ENCODE measurements at regions of chr12 and their contacts with region 1.

Region 1: DNA sequence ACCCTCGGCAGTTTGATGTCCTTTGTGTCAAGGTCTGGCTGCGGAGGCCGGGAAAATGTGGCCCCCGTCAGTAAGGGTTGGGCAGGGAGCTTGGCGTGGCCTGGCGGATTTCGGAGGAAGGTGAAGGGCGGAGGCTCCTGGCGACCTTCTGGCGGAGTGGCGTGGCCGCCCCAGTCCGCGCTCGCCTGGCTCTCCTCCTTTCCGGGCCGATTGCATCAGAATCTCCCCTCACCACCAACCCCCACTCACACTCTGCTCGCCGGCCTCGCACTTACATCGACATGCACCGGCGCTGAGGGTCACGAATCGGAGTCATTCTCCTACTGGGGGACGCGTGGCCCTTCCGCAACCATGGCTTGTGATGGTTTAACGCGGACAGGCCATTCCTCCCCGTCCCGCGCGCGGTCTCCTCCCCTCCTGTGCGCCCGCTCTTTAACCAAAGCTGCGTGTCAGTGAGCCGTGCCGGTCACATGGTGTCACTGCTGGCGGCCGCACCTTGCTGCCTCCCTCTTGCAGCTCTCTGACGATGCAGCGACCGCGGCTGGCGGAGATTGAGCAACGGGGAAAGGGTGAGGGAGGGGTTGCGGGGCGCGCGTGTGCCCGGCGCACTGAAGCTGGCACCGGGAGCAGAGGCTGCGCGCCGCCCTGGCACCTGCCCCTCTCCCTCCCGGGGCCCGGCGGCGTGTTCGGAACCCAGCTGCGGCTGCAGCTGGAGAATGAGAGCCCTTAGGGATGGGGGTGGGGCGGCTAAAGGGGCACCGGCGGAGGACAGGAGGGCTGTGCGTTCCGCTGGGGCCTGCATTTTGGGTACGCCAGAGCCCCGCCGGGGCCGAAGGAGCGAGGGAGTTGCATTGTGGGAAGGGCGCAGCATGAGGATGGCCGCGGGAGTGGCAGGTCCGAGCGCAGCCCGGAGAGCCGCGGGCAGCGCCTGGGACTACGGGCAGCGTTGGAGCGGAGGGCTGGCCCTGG is at the start of gene SLC38A1:
- DNase-seq: peak; percentile 88
- H3K4me3 ChIP-seq: peak within 1 kb of the TSS; percentile 92
- H3K27ac ChIP-seq: peak within 1 kb of the TSS; percentile 91
- H3K4me1 ChIP-seq: peaks cover 44% of the 10 kb centered on the region
- CTCF ChIP-seq: 0 out of 2 replicates have a peak, but pooled peaks have one; percentile 25
- total RNA-seq, gene SLC38A1: 114 and 117 TPM in 2 replicates

Region 2: GRCh38 chr12:45215419-45216229 is 1053.2 kb before region 1 on chr12 and contains the start of gene ANO6:
- CTCF ChIA-PET with region 1: no interaction called
- POLR2A ChIA-PET with region 1: no interaction called
- intact Hi-C with region 1: loop called (anchors 5 kb)
- DNase-seq: peak; percentile 89
- H3K4me3 ChIP-seq: peak within 1 kb of the TSS; percentile 90
- H3K27ac ChIP-seq: peak within 1 kb of the TSS; percentile 90
- H3K4me1 ChIP-seq: peaks cover 19% of the 10 kb centered on the region
- CTCF ChIP-seq: peak; percentile 71
- total RNA-seq, gene ANO6: 11.9 and 15.0 TPM in 2 replicates

Region 3: DNA sequence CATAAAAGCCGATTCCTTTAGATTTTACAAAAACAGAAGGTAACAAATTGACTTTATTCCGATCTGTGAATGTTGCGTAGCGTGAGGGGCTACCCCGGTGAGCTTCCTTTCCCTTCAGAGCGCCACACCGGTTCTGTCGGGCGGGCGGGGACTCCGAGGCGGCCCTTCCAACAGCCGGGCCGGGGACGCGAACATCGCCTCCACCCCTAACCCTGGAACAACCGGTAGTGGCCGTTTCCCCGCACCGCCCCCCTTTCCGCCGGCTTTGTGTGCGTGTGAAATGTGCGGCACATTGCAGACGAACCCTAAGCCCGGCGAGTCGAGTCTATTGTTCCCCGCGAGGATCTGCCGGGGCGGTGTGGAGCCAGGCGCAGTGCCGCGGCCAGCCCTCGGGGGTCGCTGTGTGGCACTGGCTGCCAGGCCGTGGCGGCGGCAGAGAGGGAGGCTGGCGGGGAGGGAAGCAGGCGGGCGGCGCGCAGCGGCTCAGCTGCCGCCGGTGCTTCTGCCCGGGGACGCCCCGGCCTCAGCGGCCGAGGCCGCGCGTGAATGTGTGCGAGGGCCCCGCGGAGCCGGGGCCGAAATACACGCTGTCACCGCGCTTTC is 540.1 kb before region 1 on chr12:
- CTCF ChIA-PET with region 1: no interaction called
- POLR2A ChIA-PET with region 1: no interaction called
- intact Hi-C with region 1: loop called (anchors 2 kb)
- DNase-seq: peak; percentile 98
- H3K4me3 ChIP-seq: peak overlapping the region; percentile 98
- H3K27ac ChIP-seq: peak overlapping the region; percentile 97
- H3K4me1 ChIP-seq: peaks cover 25% of the 10 kb centered on the region
- CTCF ChIP-seq: peak; percentile 79

Region 4: GRCh38 chr12:46108721-46109120 is 160.2 kb before region 1 on chr12:
- CTCF ChIA-PET with region 1: interaction called, 4 read pairs
- POLR2A ChIA-PET with region 1: no interaction called
- intact Hi-C with region 1: loop called (anchors 5 kb)
- DNase-seq: peak; percentile 91
- H3K4me3 ChIP-seq: peak overlapping the region; percentile 32
- H3K27ac ChIP-seq: peak overlapping the region; percentile 92
- H3K4me1 ChIP-seq: peaks cover 56% of the 10 kb centered on the region
- CTCF ChIP-seq: no peak

Region 5: GRCh38 chr12:46217541-46218321 is 51.1 kb before region 1 on chr12:
- CTCF ChIA-PET with region 1: no interaction called
- POLR2A ChIA-PET with region 1: interaction called, 36 read pairs
- intact Hi-C with region 1: loop called (anchors 2 kb)
- DNase-seq: peak; percentile 89
- H3K4me3 ChIP-seq: peak overlapping the region; percentile 50
- H3K27ac ChIP-seq: peak overlapping the region; percentile 91
- H3K4me1 ChIP-seq: peaks cover 75% of the 10 kb centered on the region
- CTCF ChIP-seq: no peak

Region 6: DNA sequence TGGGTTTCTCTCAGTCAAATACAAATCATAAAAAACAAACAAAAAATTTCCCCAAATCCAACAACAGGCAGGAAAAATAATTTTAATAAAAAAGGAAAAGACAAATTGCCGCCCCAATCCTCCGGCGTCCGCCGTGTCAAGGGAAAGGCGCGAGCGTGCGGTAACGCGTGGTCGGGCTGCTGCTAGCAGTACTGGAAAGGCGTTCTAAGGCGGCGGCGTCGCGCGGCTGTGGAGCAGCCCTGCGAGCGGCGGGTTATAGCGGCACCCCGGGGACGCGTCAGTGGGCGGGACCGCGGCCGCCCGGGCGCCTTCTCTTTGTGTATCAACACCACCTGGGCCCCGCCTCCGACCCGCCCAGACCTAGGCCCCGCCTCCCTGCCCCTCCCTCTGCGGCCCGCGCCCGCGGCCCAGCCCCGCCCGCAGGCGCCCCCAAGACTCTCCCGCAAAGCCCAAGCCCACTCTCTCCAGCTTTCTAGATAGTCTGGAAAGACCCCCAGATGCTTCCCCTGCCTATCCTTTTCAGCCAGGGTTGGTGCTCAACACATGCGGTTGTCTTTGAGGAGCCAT is 103.8 kb after region 1 on chr12 and contains the start of gene SLC38A2:
- CTCF ChIA-PET with region 1: no interaction called
- POLR2A ChIA-PET with region 1: interaction called, 3 read pairs
- intact Hi-C with region 1: loop called (anchors 1 kb)
- DNase-seq: peak; percentile 93
- H3K4me3 ChIP-seq: peak within 1 kb of the TSS; percentile 95
- H3K27ac ChIP-seq: peak within 1 kb of the TSS; percentile 77
- H3K4me1 ChIP-seq: peaks cover 24% of the 10 kb centered on the region
- CTCF ChIP-seq: no peak
- total RNA-seq, gene SLC38A2: 66.2 and 70.5 TPM in 2 replicates